Activated CD4-positive, alpha-beta T cell treated with anti-CD3 and anti-CD28 coated beads, Interleukin-2, amount 10 ng/mL, durations not matched to agents 24 days and 14 days (primary cell): ENCODE measurements at regions of chr11 and their contacts with region 1.

Region 1: GRCh38 chr11:13343931-13344717 is 66.5 kb downstream of the BMAL1 start:
- DNase-seq: peak; percentile 92
- H3K4me3 Mint-ChIP-seq: no peak overlapping the region
- H3K27ac Mint-ChIP-seq: no peak overlapping the region
- H3K4me1 Mint-ChIP-seq: peaks cover 28% of the 10 kb centered on the region
- H3K27me3 Mint-ChIP-seq: no peaks in the 10 kb centered on the region

Region 2: GRCh38 chr11:12963792-12964536 is 380.2 kb before region 1 on chr11:
- intact Hi-C with region 1: loop called (anchors 1 kb)
- DNase-seq: peak; percentile 87
- H3K4me3 Mint-ChIP-seq: no peak overlapping the region
- H3K27ac Mint-ChIP-seq: no peak overlapping the region
- H3K4me1 Mint-ChIP-seq: no peaks in the 10 kb centered on the region
- H3K27me3 Mint-ChIP-seq: peaks cover 13% of the 10 kb centered on the region

Region 3: DNA sequence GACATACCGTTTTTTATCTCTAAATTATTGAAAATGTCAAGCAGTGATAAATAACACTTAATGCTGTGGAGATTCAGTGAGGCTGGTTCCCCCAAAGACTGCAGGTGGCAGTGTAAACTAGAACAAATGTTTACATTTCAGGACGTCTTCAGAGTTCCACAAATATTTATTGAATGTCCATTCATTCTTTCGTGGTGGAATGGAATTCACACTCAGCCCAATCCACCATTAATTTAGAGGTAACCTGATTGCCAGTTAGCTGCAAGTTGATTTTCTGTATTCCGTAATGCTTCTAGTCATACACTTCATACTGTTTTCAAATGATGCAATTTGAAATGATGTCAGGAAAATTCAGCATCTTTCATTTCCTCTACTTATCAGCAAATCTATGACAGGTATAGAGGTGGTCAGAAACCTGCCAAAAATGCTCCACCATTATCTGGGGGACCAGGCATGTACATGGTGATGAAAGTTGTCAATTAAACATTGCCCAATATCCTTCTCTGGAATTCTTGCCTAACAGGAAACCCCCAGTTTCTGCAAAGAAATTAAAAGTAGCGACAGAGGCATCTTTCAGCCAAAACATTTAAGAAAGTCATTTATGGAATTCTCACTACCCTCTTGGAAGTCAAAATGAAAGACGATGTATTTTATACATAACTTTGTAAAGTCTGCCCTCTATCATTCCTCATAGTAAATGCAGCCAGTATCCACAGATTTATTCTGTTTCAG is 160.9 kb before region 1 on chr11:
- intact Hi-C with region 1: loop called (anchors 2 kb)
- DNase-seq: peak; percentile 63
- H3K4me3 Mint-ChIP-seq: peak overlapping the region; percentile 21
- H3K27ac Mint-ChIP-seq: no peak overlapping the region
- H3K4me1 Mint-ChIP-seq: peaks cover 9% of the 10 kb centered on the region
- H3K27me3 Mint-ChIP-seq: peaks cover 14% of the 10 kb centered on the region

Region 4: GRCh38 chr11:13249996-13250395 is 94.1 kb before region 1 on chr11:
- intact Hi-C with region 1: loop called (anchors 2 kb)
- DNase-seq: peak; percentile 60
- H3K4me3 Mint-ChIP-seq: no peak overlapping the region
- H3K27ac Mint-ChIP-seq: no peak overlapping the region
- H3K4me1 Mint-ChIP-seq: no peaks in the 10 kb centered on the region
- H3K27me3 Mint-ChIP-seq: peaks cover 21% of the 10 kb centered on the region

Region 5: DNA sequence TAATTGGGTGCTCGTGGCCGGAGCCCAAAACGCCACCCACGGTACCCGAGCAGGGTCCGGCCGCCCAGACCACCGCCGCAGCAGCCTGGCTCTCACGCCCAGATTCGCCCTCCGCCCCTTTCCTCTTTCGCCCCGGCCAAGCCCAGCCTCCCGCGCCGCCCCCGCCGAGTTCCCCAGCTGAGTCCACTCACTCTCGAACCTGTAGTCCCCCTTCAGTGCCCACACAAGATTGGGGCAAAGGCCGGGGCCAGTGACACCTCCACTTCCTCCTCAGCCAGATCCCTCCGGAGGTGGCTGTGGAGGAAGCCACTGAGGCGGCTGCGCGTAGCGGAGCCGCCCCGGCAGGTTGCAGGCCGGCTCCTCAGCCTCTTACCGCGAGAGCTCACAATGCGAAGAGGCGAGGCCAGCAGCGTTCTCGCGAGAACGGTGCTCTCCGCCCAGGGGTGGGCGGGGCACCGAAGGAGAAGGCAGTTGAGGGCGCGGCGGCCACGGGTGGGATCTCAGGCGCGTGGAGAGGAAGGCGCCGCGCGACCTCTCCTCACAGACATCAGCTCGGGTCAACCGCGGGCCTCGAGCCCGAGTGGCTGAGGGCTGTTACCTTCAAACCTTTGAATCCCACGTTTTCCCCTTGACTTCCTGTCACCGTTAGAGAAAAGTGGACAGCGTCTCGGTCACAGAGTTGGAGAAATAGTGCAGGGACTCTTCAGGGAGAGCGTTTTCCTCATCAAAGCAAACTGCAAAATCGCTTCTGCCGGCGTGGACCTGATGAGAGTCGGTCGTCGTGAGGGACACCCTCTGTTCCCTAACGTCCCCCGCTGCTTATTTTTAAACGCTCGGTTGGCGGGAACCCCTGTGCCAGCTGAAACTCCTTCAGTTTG is 119.0 kb after region 1 on chr11 and contains the start of gene BTBD10:
- intact Hi-C with region 1: loop called (anchors 2 kb)
- DNase-seq: peak; percentile 98
- H3K4me3 Mint-ChIP-seq: peak within 1 kb of the TSS; percentile 98
- H3K27ac Mint-ChIP-seq: peak within 1 kb of the TSS; percentile 97
- H3K4me1 Mint-ChIP-seq: peaks cover 30% of the 10 kb centered on the region
- H3K27me3 Mint-ChIP-seq: no peaks in the 10 kb centered on the region
- total RNA-seq, gene BTBD10: 20.3 and 21.8 TPM in 2 replicates